Lower leg skin (tissue), 4 donors: ENCODE measurements at regions of chr7 and their contacts with region 1.

Region 1: DNA sequence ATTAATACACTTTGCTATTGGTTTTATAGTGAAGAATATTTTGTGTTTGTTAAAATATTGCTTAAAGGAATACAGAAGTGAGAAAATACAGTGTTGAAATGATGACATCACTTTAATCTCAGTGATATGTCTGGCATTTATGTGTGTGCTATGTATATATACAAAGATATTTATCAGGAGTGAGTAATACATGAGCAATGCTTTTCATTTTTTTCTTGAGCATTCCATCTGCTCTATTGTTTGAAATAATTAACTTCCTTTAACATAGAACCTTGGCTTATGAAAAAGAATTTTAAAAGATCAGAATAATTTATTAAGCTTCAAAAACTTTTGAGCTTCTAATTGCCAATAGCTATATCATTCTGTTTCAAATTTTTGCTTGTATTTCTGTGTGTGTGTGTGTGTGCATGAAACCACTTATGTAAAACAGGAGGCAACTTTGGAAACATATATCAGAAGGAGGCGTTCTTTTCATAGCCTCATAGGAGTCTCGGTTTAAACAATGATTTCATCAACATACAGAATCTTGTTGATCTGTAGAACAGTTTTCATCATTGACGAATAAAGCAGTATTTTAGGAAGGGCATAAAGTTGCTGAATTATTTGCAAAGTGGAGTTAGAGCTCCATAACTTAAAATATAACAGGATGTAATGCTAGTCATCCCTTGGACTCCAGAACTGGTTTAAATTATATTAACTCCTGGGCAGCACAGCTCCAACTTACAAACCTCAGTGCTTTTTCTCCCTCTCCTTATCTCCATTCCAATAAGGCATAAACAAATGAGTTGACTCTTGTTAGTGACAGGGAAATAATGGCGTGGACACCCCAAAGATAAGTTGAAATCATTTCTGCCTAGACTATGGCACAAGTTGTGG is 228.4 kb upstream of the DGKB start:
- DNase-seq: no peak
- H3K4me3 ChIP-seq: no peak overlapping the region
- CTCF ChIP-seq: no peak
- POLR2A ChIP-seq: no peak

Region 2: DNA sequence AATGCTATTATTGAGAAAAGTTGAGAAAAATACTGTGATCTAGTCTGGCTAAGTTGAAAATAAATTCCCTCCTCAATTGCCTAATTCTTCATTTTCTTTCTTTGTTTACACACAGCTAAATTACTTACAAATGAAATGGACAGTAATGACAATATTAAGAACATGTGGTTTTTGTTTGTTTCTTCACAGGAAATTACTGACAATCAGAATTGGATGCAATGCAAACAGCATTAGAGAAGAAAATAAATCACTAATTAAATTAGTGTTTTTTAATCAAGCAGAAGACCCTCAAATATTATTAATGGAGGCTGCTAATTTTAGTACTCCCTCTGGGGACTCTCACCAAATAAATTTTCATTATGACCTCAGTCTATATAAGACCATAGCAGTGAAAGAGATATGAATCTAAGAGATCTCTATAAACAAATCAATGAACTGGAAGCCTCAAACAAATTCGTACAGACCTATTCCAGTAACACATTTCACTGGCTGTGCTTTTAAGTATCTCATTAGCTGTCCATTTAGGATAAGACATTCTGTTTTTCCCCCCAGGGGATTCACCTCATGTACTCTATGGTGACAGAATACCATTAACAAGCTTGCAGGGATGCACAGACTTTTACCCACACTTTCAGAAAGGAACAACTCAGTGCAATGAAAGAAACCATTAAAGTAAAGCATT is 26.4 kb before region 1 on chr7:
- intact Hi-C with region 1: loop called (anchors 2 kb)
- DNase-seq: no peak
- H3K4me3 ChIP-seq: no peak overlapping the region
- CTCF ChIP-seq: no peak
- POLR2A ChIP-seq: no peak

Region 3: GRCh38 chr7:15178065-15178464 is 47.2 kb after region 1 on chr7:
- intact Hi-C with region 1: no loop called
- DNase-seq: no peak
- H3K4me3 ChIP-seq: no peak overlapping the region
- CTCF ChIP-seq: no peak
- POLR2A ChIP-seq: no peak